HCT116 (cell line): ENCODE measurements at regions of chr5 and their contacts with region 1.

Region 1: GRCh38 chr5:108148715-108149139 is 233.2 kb downstream of the FBXL17 start:
- DNase-seq: no peak
- ATAC-seq: peak; percentile 74
- H3K4me3 ChIP-seq: no peak overlapping the region
- H3K27ac ChIP-seq: no peak overlapping the region
- H3K4me1 ChIP-seq: no peaks in the 10 kb centered on the region
- H3K27me3 ChIP-seq: no peaks in the 10 kb centered on the region
- CTCF ChIP-seq: peak; percentile 32 to 66 (median 58); a peak in 5 of 6 replicates
- POLR2A ChIP-seq: no peak
- RAD21 ChIP-seq: peak; percentile 56

Region 2: DNA sequence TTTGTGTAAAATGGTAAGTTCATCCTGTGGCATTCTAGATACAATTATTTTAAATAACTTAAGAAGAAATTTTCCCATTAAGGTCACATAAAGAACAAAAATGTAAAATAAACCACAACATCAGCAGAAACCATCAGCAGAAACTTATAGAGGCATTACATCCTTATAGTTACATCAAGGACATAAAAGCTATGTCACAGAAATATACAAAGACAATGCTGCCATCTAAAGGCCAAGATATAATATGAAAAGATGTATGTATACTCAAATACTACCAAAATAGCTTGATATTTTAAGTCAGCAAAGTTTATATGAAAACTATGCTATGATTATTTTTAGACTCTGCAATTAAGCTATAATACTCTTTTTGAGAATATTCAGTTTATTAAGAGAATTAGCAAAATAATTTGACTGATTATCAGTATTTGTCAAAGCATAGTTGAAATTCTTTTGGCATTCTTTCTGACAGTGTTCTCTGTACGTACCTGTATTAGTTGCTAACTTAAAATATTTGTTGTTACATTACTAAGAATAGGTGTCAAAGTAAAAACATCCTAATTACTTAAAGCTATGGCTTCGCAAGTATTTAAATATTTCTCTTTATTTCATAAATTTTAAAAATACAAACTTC is 196.9 kb after region 1 on chr5:
- CTCF ChIA-PET with region 1: interaction called, 7 read pairs
- POLR2A ChIA-PET with region 1: no interaction called
- RAD21 ChIA-PET with region 1: no interaction called
- intact Hi-C with region 1: loop called (anchors 2 kb)
- DNase-seq: peak; percentile 13
- ATAC-seq: peak; percentile 62
- H3K4me3 ChIP-seq: no peak overlapping the region
- H3K27ac ChIP-seq: no peak overlapping the region
- H3K4me1 ChIP-seq: no peaks in the 10 kb centered on the region
- H3K27me3 ChIP-seq: no peaks in the 10 kb centered on the region
- CTCF ChIP-seq: peak in 2 of 3 experiments; percentile 42 to 58; a peak in 3 of 6 replicates
- POLR2A ChIP-seq: no peak
- RAD21 ChIP-seq: peak; percentile 57